Cardiac septum (tissue), 1 donor: ENCODE measurements at regions of chr15 and their contacts with region 1.

Region 1: GRCh38 chr15:70670680-70671079 is 92.7 kb downstream of the UACA start:
- DNase-seq: no peak

Region 2: DNA sequence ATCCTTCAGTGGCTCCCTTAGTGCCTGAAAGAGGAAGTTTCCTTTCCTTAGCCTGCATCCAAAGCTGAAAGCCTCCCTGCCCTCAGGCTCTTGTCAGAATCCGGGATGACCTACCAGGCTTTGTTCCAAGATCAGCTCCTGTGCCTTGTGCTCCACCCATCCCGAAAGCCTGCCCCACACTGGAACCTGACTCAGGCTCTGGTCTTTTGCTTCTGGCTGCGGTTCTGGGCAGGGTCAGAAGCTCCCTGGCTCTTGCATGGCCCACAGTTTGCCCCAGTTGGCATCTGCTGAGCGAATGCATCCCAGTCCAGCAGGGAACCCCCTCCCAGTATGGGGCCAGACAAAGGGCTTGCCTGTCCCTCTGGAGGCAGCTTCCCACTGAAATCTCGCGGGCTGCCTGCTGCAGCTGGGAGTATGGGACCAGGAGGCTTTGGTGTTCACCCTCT is 1282.4 kb before region 1 on chr15:
- intact Hi-C with region 1: no loop called
- DNase-seq: no peak

Region 3: DNA sequence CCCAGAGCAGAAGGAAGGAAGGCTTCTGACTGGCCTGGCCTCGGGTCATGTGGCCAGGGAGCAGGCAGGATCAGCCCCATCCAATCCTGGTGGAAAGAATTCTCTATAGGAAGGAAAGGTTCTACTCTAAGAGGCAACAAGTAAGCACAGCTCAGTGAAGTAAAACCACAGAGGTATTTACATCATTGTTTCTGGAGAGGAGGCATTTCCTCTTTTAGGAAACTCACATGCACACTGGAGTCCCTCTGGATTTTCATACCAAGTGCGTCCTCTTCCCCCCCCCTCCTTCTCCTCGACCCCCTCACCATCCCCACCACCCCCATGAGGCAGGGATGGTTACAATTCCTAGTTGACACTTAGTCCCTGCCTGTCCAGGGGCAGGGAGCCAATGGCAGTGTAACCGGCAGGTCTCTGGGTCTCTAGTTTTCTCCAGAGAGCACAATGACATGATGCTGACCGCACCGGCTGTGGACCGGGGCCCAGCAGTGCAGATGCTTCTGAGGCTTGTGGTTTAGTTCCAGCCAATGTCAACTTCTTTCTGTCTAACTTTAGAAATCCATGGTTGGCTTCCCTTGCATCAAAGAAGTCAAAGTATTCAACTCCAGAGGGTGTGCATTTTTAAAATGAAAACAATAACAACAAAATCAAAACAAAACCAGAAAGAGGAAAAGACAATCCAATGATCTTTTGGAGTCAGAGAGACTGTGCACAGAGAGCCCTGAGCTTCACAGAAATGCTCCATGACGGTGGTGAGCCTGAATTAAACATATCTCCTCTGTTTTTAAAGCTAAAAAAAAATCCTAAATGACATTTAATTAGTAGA is 342.6 kb before region 1 on chr15:
- intact Hi-C with region 1: no loop called
- DNase-seq: no peak

Region 4: GRCh38 chr15:70653426-70653825 is 17.3 kb before region 1 on chr15:
- intact Hi-C with region 1: no loop called
- DNase-seq: no peak

Region 5: DNA sequence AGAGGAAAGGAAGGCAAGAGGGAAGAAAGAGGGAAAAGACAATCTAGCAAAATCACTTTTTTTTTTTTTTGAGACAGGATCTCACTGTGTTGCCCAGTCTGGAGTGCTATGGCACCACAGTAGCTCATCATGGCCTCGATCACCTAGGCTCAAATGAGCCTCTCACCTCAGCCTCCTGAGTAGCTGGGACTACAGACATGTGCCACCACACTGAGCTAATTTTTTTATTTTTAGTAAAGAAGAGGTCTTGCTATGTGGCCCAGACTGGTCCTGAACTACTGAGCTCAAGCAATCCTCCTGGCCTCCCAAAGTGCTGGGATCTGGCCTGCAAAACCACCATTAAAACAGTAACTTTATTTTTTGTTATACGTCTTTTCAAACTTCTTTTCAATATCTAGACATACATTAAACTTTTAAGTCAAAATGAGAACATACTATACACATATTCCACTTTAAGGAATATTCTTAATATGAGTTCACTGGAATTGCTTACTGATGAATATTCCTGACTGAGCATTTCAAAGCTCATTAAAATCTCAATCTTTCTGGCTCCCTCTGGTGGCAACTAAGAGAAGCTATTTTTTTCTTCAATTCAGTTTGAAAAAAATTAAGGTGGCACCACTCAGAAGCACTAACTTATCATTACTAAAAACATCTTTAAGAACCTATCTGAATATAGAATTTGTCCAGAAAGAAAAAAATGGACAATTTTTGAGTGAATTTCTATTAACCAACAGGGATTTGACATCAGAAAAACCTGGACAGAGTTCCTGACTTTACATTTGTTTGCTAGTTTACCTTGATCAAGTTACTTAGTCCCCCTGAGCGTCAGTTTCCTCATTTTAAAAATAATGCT is 51.8 kb after region 1 on chr15:
- intact Hi-C with region 1: loop called (anchors 10 kb)
- DNase-seq: no peak